B cell (primary cell): ENCODE measurements at regions of chr1 and their contacts with region 1.

Region 1: DNA sequence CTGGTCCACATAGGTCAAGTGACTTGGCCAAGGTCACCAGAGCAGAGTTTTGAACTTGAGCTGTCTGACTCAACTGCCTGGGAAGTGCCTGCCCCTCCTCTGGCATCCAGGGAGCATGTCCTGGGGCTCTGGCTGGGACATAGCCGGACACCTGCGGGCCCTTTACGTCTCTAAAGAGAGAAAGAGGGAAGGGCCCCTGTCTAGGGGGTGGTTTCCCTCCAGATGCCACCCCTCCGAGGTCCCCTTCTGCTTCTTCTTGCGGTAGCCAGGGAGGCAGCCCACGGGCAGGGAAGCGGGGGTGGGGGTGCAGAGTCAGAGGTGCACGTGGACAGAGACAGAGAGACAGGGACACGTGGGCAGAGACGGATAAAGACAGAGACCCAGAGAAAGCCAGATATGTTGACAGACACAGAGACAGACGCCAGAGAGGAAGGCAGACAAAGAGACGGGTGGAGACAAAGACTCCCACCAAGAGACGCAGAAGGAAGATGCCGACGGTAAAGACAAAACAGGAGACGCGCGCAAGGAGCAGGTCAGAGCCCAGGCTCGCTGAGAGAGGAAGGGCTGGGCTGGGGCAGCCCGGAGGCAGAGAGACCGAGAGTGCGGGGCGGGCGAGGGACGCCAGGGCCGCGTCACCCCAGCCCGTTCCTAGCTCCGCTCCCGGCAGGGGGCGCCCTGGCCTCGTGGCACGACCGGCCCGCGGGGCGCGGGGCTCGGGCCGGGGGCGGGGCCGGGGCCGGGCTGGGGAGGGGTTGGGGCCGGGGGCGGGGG is 458 bp upstream of the ALPL start:
- DNase-seq: peak; percentile 82
- ATAC-seq: peak; percentile 96
- H3K4me3 ChIP-seq: peak overlapping the region in 4 of 5 experiments; percentile 11 to 41 (median 38)
- H3K4me3 Mint-ChIP-seq: peak overlapping the region; percentile 82
- H3K27ac ChIP-seq: no peak overlapping the region
- H3K27ac Mint-ChIP-seq: no peak overlapping the region
- H3K4me1 ChIP-seq: peaks cover 22 to 33% of the 10 kb centered on the region in 2 donors
- H3K4me1 Mint-ChIP-seq: peaks cover 19% of the 10 kb centered on the region
- H3K27me3 ChIP-seq: peaks cover 0 to 39% (median 9%) of the 10 kb centered on the region in 4 experiments
- H3K27me3 Mint-ChIP-seq: peaks cover 34% of the 10 kb centered on the region
- CTCF ChIP-seq: peak; percentile 39

Region 2: DNA sequence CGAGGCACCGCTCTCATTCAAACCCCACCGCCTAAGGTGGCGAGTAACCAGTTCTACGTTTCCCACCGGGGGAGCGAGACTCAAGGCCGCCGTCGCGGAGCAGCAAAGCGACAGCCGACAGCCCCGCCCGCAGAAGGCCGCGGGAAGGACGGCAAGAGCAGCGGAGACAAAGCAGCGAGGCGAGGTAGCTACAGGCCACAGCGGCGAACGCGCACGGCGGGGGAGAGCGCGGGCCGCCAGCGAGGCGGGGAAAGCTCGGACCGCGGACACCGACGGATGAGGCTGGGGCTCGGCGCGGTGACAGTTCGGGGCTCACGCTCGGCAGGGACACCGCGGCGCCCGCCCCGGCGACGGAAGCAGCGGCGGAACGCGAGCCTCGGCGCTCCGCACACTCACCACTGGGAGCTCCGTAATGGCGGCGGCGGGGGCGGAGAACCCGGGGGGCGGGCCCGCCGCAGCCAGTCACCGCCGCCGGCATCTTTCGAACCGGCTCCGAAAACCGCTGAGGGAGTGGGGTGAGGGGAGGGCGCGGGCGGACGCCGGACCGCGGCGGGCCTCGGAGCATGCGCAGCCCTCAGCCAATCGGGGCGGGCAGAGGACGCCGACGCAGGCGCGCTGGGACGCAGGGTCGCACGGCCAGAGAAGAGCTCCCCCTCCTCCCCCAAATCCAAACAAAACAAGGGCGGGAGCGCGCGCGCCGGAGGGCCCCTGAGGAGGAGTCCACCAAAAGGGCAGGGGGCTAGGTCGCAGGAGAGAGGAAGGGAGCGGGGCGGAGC is 722.3 kb before region 1 on chr1:
- CTCF ChIA-PET with region 1: no interaction called
- POLR2A ChIA-PET with region 1: no interaction called
- intact Hi-C with region 1: no loop called
- DNase-seq: peak; percentile 98
- ATAC-seq: peak; percentile 72
- H3K4me3 ChIP-seq: peak overlapping the region; percentile 78 to 92 (median 82)
- H3K4me3 Mint-ChIP-seq: peak overlapping the region; percentile 99
- H3K27ac ChIP-seq: peak overlapping the region; percentile 81 to 91
- H3K27ac Mint-ChIP-seq: peak overlapping the region; percentile 98
- H3K4me1 ChIP-seq: peaks cover 19 to 33% of the 10 kb centered on the region in 2 donors
- H3K4me1 Mint-ChIP-seq: peaks cover 39% of the 10 kb centered on the region
- H3K27me3 ChIP-seq: no peaks in the 10 kb centered on the region
- H3K27me3 Mint-ChIP-seq: no peaks in the 10 kb centered on the region
- CTCF ChIP-seq: no peak

Region 3: DNA sequence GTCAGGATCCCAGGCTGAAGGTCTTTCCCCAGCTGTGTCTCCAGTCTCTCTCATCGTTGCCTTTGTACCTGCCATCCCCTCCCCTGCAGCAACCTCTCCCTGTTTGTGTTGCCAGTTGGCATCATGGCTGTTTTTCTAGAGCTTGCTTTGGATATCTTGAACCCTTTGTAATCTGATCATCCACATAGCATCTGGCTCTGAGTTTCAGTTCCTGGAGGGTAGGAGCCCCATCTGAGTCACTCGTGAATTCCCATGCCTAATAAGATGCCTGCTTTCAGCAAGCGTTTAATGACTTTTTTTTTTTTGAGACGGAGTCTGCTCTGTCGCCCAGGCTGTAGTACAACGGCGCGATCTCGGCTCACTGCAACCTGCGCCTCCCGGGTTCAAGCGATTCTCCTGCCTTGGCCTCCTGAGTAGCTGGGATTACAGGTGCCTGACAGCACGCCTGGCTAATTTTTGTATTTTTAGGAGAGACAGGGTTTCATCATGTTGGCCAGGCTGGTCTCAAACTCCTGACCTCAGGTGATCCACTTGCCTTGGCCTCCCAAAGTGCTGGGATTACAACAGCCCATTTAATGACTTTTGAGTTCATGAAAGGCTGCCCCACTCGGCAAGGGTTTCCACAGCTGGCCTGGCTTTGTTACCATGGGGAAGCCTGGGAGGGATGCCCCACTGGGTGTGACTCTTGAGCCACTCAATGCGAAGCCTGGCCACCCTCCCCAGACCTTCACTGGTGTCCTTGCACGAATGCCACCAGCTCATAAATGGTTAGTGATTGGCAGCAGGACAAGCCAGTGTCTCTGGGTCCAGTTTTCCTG is 12.3 kb after region 1 on chr1:
- CTCF ChIA-PET with region 1: interaction called, 19 read pairs
- POLR2A ChIA-PET with region 1: interaction called, 6 read pairs
- intact Hi-C with region 1: loop called (anchors 1 kb)
- DNase-seq: no peak
- ATAC-seq: no peak
- H3K4me3 ChIP-seq: no peak overlapping the region
- H3K4me3 Mint-ChIP-seq: peak overlapping the region; percentile 37
- H3K27ac ChIP-seq: no peak overlapping the region
- H3K27ac Mint-ChIP-seq: peak overlapping the region; percentile 61
- H3K4me1 ChIP-seq: peaks cover 69 to 94% of the 10 kb centered on the region in 2 donors
- H3K4me1 Mint-ChIP-seq: peaks cover 78% of the 10 kb centered on the region
- H3K27me3 ChIP-seq: no peaks in the 10 kb centered on the region
- H3K27me3 Mint-ChIP-seq: no peaks in the 10 kb centered on the region
- CTCF ChIP-seq: no peak

Region 4: GRCh38 chr1:21534674-21535378 is 26.1 kb after region 1 on chr1:
- CTCF ChIA-PET with region 1: interaction called, 186 read pairs
- POLR2A ChIA-PET with region 1: no interaction called
- intact Hi-C with region 1: loop called (anchors 1 kb)
- DNase-seq: peak; percentile 77
- ATAC-seq: peak; percentile 78
- H3K4me3 ChIP-seq: no peak overlapping the region
- H3K4me3 Mint-ChIP-seq: no peak overlapping the region
- H3K27ac ChIP-seq: no peak overlapping the region
- H3K27ac Mint-ChIP-seq: no peak overlapping the region
- H3K4me1 ChIP-seq: peaks cover 0 to 10% of the 10 kb centered on the region in 2 donors
- H3K4me1 Mint-ChIP-seq: peaks cover 5% of the 10 kb centered on the region
- H3K27me3 ChIP-seq: peaks cover 0 to 9% (median 4%) of the 10 kb centered on the region in 4 experiments
- H3K27me3 Mint-ChIP-seq: peaks cover 23% of the 10 kb centered on the region
- CTCF ChIP-seq: peak; percentile 65

Region 5: DNA sequence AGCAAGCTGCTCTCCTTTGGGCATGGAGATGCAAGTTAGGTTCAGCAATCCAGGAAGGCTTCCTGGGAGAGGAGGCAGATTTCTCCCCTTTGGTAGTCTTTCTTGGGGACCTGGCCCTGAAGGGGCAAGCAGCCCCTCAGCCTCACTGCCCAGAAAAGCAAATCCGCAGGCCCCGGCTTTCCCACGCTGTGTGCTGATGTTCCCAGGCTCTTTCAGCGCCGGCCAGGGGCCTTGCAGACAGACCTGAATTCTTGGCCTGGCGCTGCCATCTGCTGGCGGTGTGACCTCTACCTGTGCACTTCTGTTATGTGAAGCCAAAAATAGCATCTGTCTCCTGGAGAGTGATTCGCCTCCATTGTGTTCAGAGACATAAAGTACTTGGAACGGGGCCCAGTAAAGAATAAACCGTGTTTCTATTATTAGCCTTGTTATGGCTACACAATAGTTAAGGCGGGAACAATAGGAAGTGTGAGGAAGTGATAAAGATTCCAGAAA is 65.3 kb after region 1 on chr1:
- CTCF ChIA-PET with region 1: interaction called, 3 read pairs
- POLR2A ChIA-PET with region 1: no interaction called
- intact Hi-C with region 1: loop called (anchors 2 kb)
- DNase-seq: peak; percentile 46
- ATAC-seq: no peak
- H3K4me3 ChIP-seq: no peak overlapping the region
- H3K4me3 Mint-ChIP-seq: no peak overlapping the region
- H3K27ac ChIP-seq: no peak overlapping the region
- H3K27ac Mint-ChIP-seq: no peak overlapping the region
- H3K4me1 ChIP-seq: no peaks in the 10 kb centered on the region
- H3K4me1 Mint-ChIP-seq: peaks cover 1% of the 10 kb centered on the region
- H3K27me3 ChIP-seq: peaks cover 0 to 20% (median 6%) of the 10 kb centered on the region in 4 experiments
- H3K27me3 Mint-ChIP-seq: peaks cover 9% of the 10 kb centered on the region
- CTCF ChIP-seq: peak; percentile 14

Region 6: GRCh38 chr1:21604208-21604957 is 95.6 kb after region 1 on chr1:
- CTCF ChIA-PET with region 1: no interaction called
- POLR2A ChIA-PET with region 1: no interaction called
- intact Hi-C with region 1: no loop called
- DNase-seq: no peak
- ATAC-seq: no peak
- H3K4me3 ChIP-seq: no peak overlapping the region
- H3K4me3 Mint-ChIP-seq: no peak overlapping the region
- H3K27ac ChIP-seq: no peak overlapping the region
- H3K27ac Mint-ChIP-seq: no peak overlapping the region
- H3K4me1 ChIP-seq: peaks cover 5 to 8% of the 10 kb centered on the region in 2 donors
- H3K4me1 Mint-ChIP-seq: peaks cover 19% of the 10 kb centered on the region
- H3K27me3 ChIP-seq: peaks cover 0 to 3% (median 0%) of the 10 kb centered on the region in 4 experiments
- H3K27me3 Mint-ChIP-seq: peaks cover 25% of the 10 kb centered on the region
- CTCF ChIP-seq: no peak

Region 7: GRCh38 chr1:21659099-21659923 is 150.5 kb after region 1 on chr1:
- CTCF ChIA-PET with region 1: no interaction called
- POLR2A ChIA-PET with region 1: no interaction called
- intact Hi-C with region 1: loop called (anchors 2 kb)
- DNase-seq: peak; percentile 85
- ATAC-seq: peak; percentile 92
- H3K4me3 ChIP-seq: no peak overlapping the region
- H3K4me3 Mint-ChIP-seq: peak overlapping the region; percentile 39
- H3K27ac ChIP-seq: no peak overlapping the region
- H3K27ac Mint-ChIP-seq: no peak overlapping the region
- H3K4me1 ChIP-seq: peaks cover 11% of the 10 kb centered on the region in 2 donors
- H3K4me1 Mint-ChIP-seq: peaks cover 10% of the 10 kb centered on the region
- H3K27me3 ChIP-seq: peaks cover 0 to 46% (median 14%) of the 10 kb centered on the region in 4 experiments
- H3K27me3 Mint-ChIP-seq: peaks cover 37% of the 10 kb centered on the region
- CTCF ChIP-seq: peak; percentile 91

Region 8: GRCh38 chr1:21752186-21752585 is 243.4 kb after region 1 on chr1:
- CTCF ChIA-PET with region 1: no interaction called
- POLR2A ChIA-PET with region 1: no interaction called
- intact Hi-C with region 1: no loop called
- DNase-seq: no peak
- ATAC-seq: no peak
- H3K4me3 ChIP-seq: no peak overlapping the region
- H3K4me3 Mint-ChIP-seq: no peak overlapping the region
- H3K27ac ChIP-seq: no peak overlapping the region
- H3K27ac Mint-ChIP-seq: no peak overlapping the region
- H3K4me1 ChIP-seq: no peaks in the 10 kb centered on the region
- H3K4me1 Mint-ChIP-seq: no peaks in the 10 kb centered on the region
- H3K27me3 ChIP-seq: no peaks in the 10 kb centered on the region
- H3K27me3 Mint-ChIP-seq: no peaks in the 10 kb centered on the region
- CTCF ChIP-seq: no peak

Region 9: GRCh38 chr1:21963477-21964217 is 454.9 kb after region 1 on chr1:
- CTCF ChIA-PET with region 1: interaction called, 4 read pairs
- POLR2A ChIA-PET with region 1: no interaction called
- intact Hi-C with region 1: loop called (anchors 2 kb)
- DNase-seq: peak; percentile 83
- ATAC-seq: peak; percentile 96
- H3K4me3 ChIP-seq: no peak overlapping the region
- H3K4me3 Mint-ChIP-seq: no peak overlapping the region
- H3K27ac ChIP-seq: no peak overlapping the region
- H3K27ac Mint-ChIP-seq: no peak overlapping the region
- H3K4me1 ChIP-seq: peaks cover 0 to 4% of the 10 kb centered on the region in 2 donors
- H3K4me1 Mint-ChIP-seq: no peaks in the 10 kb centered on the region
- H3K27me3 ChIP-seq: no peaks in the 10 kb centered on the region
- H3K27me3 Mint-ChIP-seq: peaks cover 14% of the 10 kb centered on the region
- CTCF ChIP-seq: peak; percentile 94

Region 10: DNA sequence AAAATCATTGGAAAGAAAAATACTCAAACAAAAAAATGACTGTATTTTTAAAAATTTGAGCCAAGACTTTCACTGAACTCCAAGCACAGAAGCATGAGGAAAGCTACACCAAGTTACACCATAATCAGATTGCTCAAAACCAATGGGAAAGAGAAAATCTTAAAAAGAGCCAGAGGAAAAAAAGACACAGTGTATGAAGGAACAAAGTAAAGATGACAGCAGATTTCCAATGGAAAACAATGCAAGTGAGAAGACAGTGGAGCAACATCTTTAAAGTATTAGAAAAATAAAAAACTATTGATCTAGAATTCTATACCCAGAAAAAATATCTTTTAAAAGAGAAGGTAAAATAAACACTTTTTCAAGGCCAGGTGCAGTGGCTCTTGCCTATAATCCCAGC is 795.1 kb after region 1 on chr1:
- CTCF ChIA-PET with region 1: no interaction called
- POLR2A ChIA-PET with region 1: no interaction called
- intact Hi-C with region 1: no loop called
- DNase-seq: no peak
- ATAC-seq: no peak
- H3K4me3 ChIP-seq: no peak overlapping the region
- H3K4me3 Mint-ChIP-seq: no peak overlapping the region
- H3K27ac ChIP-seq: no peak overlapping the region
- H3K27ac Mint-ChIP-seq: no peak overlapping the region
- H3K4me1 ChIP-seq: no peaks in the 10 kb centered on the region
- H3K4me1 Mint-ChIP-seq: no peaks in the 10 kb centered on the region
- H3K27me3 ChIP-seq: peaks cover 0 to 4% (median 1%) of the 10 kb centered on the region in 4 experiments
- H3K27me3 Mint-ChIP-seq: peaks cover 30% of the 10 kb centered on the region
- CTCF ChIP-seq: no peak